Left ventricle myocardium superior (tissue), 1 donor: ENCODE measurements at regions of chr19 and their contacts with region 1.

Region 1: GRCh38 chr19:34974646-34975045 is 10.6 kb upstream of the ZNF792 start:
- DNase-seq: no peak
- ATAC-seq: no peak

Region 2: DNA sequence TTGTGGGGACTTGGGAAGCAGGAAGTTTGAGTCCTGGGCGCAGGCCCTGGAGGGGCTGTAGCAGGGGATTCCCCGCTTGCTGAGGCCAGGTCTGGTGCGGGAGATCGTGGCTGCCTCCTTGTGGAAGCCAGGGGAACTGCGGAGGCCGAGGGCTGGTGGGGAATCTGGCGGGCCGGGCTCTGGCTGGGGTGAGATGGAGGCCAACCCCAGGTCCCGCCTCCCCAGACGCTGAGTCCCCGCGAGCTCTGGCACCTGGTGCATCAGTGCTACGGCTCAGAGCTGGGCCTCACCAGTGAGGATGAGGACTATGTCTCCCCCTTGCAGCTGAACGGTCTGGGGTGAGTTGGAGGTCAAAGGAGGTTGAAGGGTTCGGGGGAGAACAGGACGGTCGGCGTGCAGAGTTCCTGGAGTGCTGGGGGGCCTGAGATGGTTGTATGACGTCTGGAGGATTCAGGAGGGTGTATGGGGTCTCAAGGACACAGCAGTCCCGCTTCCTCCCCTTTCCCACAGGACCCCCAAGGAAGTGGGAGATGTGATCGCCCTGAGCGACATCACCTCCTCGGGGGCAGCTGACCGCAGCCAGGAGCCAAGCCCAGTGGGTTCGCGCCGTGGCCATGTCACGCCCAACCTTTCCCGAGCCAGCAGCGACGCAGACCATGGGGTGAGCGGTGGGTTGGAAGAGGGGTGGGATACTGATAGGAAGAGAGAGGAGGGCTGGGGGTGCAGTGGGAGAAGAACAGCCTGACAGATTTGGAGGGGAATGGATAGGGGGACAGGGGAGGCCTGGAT is 38.6 kb after region 1 on chr19:
- intact Hi-C with region 1: loop called (anchors 5 kb)
- DNase-seq: peak; percentile 85
- ATAC-seq: peak; percentile 75